Activated T-helper 1 cell treated with anti-CD3 and anti-CD28 coated beads, Interleukin-12 subunit alpha, Interleukin-12 subunit beta, Interleukin-2, Interleukin-4 antibody, amounts not matched to agents 30 ng/mL and 10 ng/mL and 1 ng/mL, durations not matched to agents 14 hours and 24 hours and 36 hours (primary cell): ENCODE measurements at regions of chr17 and their contacts with region 1.

Region 1: DNA sequence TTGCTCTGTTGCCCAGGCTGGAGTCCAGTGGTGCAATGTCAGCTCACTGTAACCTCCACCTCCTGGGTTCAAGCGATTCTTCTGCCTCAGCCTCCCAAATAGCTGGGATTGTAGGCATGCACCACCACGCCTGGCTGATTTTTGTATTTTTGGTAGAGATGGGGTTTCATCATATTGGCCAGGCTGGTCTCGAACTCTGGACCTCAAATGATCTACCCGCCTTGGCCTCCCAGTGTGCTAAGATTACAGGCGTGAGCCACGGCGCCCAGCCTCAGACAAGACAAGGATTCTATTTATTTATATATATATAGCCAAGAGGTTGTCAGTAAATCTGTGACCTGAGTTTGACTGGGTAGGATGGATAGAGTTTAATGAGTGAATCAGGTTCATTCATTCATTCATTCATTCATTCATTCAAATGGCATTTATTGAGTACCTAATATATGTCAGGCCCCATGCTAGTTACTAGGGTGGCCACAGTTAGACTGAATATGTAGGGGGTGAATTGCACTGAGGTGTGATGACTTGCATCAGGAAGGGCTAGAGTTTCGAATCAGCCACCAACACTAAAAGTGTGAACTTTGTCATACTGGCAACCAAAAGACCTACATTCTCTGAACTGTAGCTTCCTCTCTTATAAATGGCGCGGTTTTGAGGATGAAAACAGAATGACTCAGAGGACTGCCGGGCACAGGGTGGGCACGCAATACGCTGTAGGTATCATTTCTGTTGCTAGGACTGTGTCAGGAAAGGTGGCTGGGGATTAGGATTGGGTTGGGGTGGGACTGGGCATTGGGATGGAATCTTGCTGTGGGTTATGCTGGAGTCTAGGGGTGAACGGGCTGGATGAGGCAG is 37.8 kb downstream of the ITGAE start:
- DNase-seq: peak; percentile 44
- H3K4me3 Mint-ChIP-seq: peak overlapping the region; percentile 71
- H3K27ac Mint-ChIP-seq: peak overlapping the region; percentile 96
- H3K4me1 Mint-ChIP-seq: peaks cover 51% of the 10 kb centered on the region
- H3K27me3 Mint-ChIP-seq: no peaks in the 10 kb centered on the region

Region 2: DNA sequence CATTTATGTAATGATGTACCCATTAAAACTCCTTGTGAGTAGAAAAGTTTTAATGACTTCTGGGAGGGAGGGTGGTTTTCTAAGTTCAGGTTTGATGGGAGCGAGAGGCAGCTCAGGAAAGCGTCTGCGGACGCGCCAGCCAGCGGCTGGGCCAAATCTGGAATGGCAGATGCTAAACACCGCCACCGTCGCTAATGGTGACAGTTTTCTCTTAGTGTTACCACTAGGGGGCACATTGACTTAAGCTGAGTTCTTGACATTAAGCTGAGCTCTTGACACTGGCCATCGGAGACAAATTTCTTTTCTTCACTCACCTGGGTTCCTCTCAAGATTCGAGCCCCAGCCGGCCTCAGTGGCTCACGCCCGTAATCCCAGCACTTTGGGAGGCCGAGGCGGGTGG is 160.7 kb before region 1 on chr17:
- intact Hi-C with region 1: no loop called
- DNase-seq: no peak
- H3K4me3 Mint-ChIP-seq: no peak overlapping the region
- H3K27ac Mint-ChIP-seq: no peak overlapping the region
- H3K4me1 Mint-ChIP-seq: no peaks in the 10 kb centered on the region
- H3K27me3 Mint-ChIP-seq: no peaks in the 10 kb centered on the region

Region 3: DNA sequence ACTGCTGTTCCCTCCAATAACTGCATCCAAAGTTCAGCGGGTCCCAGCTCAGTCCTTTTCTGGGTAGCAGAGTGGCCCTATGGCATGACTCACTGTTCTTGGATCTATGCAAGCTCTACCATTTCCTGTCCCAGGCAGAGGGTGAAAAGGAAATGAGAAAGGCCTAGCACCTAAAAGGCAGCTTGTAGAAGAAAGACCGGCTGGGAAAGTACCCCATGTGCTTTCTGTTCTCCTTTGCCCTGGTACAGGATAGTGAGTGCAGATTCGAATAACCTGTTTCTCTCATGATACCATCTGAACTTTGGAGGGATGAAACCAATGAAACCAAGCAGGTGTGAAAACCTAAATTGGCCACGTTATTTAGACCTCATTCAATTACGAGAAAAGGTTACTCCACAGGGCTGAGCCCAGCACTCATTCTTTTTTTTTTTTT is 52.2 kb before region 1 on chr17:
- intact Hi-C with region 1: loop called (anchors 1 kb)
- DNase-seq: peak; percentile 83
- H3K4me3 Mint-ChIP-seq: peak overlapping the region; percentile 64
- H3K27ac Mint-ChIP-seq: peak overlapping the region; percentile 74
- H3K4me1 Mint-ChIP-seq: peaks cover 56% of the 10 kb centered on the region
- H3K27me3 Mint-ChIP-seq: no peaks in the 10 kb centered on the region

Region 4: GRCh38 chr17:3730881-3731429 is 32.2 kb before region 1 on chr17:
- intact Hi-C with region 1: no loop called
- DNase-seq: no peak
- H3K4me3 Mint-ChIP-seq: no peak overlapping the region
- H3K27ac Mint-ChIP-seq: no peak overlapping the region
- H3K4me1 Mint-ChIP-seq: peaks cover 23% of the 10 kb centered on the region
- H3K27me3 Mint-ChIP-seq: no peaks in the 10 kb centered on the region

Region 5: DNA sequence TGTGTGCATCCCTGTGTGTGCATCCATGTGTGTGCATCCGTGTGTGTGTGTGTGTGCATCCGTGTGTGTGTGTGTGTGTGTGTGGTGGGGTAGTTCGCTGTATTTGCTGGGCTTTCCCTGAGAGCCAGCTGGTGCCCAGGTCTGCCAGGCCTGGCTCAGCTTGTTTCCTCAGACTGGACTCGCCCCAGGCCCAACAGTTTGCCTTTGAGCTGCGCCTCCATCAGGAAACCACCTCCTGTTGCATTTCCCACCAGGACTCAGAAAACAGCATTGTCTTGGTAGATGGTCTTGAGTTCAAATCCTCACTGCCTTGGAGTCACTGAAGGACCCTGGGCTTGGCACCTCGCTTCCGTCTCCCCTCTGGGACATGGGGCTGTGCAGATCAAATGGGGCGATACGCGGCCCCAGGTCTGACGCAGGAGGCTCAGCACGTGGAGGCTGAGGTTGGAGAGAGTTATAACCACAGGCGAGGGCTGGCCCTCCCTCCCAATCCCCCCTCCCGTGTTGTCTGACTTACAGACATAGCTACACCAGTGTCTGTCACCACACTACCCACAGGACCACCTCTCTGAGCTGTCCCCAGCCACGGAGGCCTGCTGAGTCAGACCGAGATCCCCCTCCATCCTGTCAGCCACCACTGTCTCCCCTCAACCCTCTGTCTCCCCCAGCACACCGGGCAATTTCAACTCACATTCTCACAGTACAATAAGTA is 33.1 kb after region 1 on chr17:
- intact Hi-C with region 1: loop called (anchors 1 kb)
- DNase-seq: peak; percentile 48
- H3K4me3 Mint-ChIP-seq: no peak overlapping the region
- H3K27ac Mint-ChIP-seq: peak overlapping the region; percentile 9
- H3K4me1 Mint-ChIP-seq: peaks cover 32% of the 10 kb centered on the region
- H3K27me3 Mint-ChIP-seq: no peaks in the 10 kb centered on the region

Region 6: GRCh38 chr17:3818786-3819185 is 55.6 kb after region 1 on chr17:
- intact Hi-C with region 1: no loop called
- DNase-seq: no peak
- H3K4me3 Mint-ChIP-seq: no peak overlapping the region
- H3K27ac Mint-ChIP-seq: no peak overlapping the region
- H3K4me1 Mint-ChIP-seq: no peaks in the 10 kb centered on the region
- H3K27me3 Mint-ChIP-seq: no peaks in the 10 kb centered on the region

Region 7: GRCh38 chr17:3879186-3879585 is 116.0 kb after region 1 on chr17:
- intact Hi-C with region 1: no loop called
- DNase-seq: no peak
- H3K4me3 Mint-ChIP-seq: no peak overlapping the region
- H3K27ac Mint-ChIP-seq: peak overlapping the region; percentile 52
- H3K4me1 Mint-ChIP-seq: no peaks in the 10 kb centered on the region
- H3K27me3 Mint-ChIP-seq: no peaks in the 10 kb centered on the region